Left ventricle myocardium inferior (tissue), 1 donor: ENCODE measurements at regions of chr2 and their contacts with region 1.

Region 1: GRCh38 chr2:186641807-186642321 is 52.0 kb upstream of the FAM171B start:
- DNase-seq: no peak
- H3K4me3 ChIP-seq: no peak overlapping the region
- H3K27ac ChIP-seq: peak overlapping the region; percentile 10
- H3K4me1 ChIP-seq: no peaks in the 10 kb centered on the region
- H3K27me3 ChIP-seq: no peaks in the 10 kb centered on the region
- CTCF ChIP-seq: peak; percentile 83

Region 2: GRCh38 chr2:186503848-186504606 is 137.8 kb before region 1 on chr2:
- intact Hi-C with region 1: loop called (anchors 2 kb)
- DNase-seq: no peak
- H3K4me3 ChIP-seq: no peak overlapping the region
- H3K27ac ChIP-seq: no peak overlapping the region
- H3K4me1 ChIP-seq: peaks cover 3% of the 10 kb centered on the region
- H3K27me3 ChIP-seq: no peaks in the 10 kb centered on the region
- CTCF ChIP-seq: peak; percentile 71